ENCODE measurements at regions of chr1 and their contacts with region 1.

Region 1: DNA sequence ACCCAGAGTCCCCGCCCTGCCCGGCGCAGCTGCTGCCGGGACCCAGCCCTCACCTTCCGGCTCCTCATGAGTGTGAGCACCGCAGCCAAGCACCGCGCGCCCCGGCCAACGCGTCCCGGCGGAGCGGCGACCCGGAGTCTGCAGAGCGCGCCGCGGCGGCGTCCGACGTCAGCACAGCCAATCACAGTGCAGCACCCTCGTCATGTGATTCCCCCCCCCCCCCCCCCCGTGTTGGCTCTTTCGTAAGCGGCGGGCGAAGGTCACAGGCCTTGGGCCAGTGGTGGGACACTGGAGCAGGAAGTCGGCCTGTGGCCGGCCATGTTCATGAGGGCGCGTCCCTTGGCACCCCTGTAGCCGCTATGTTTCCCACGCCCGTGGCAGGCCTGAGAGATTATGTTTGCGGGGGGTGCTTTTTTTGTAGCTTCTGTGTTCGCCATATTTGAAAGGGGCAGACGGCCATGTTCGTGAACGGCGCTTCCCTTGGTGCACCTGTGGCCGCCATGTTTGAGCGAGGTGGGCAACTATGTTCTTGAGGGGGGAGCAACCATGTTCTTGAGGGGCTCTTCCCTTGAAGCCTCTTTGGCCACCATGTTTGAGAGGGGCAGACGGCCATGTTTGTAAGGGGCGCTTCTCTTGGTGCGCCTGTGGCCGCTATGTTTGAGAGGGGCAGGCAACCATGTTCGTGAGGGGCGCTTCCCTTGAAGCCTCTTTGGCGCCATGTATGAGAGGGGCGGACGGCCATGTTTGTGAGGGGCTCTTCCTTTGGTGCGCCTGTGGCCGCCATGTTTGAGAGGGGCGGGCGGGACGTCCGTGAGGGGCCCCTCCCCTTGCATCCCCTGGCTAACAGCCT is at the start of gene C1orf174:
- DNase-seq: peak; percentile 93
- H3K4me3 Mint-ChIP-seq: peak within 1 kb of the TSS; percentile 90
- H3K27ac Mint-ChIP-seq: peak within 1 kb of the TSS; percentile 99
- H3K4me1 Mint-ChIP-seq: peaks cover 55% of the 10 kb centered on the region
- H3K27me3 Mint-ChIP-seq: no peaks in the 10 kb centered on the region
- total RNA-seq, gene C1orf174: 29.5 to 30.6 TPM

Region 2: GRCh38 chr1:2575801-2576663 is 1324.3 kb before region 1 on chr1:
- CTCF ChIA-PET with region 1: no interaction called
- intact Hi-C with region 1: loop called (anchors 5 kb)
- DNase-seq: no peak
- H3K4me3 Mint-ChIP-seq: no peak overlapping the region
- H3K27ac Mint-ChIP-seq: peak overlapping the region; percentile 97
- H3K4me1 Mint-ChIP-seq: peaks cover 40% of the 10 kb centered on the region
- H3K27me3 Mint-ChIP-seq: no peaks in the 10 kb centered on the region

Region 3: DNA sequence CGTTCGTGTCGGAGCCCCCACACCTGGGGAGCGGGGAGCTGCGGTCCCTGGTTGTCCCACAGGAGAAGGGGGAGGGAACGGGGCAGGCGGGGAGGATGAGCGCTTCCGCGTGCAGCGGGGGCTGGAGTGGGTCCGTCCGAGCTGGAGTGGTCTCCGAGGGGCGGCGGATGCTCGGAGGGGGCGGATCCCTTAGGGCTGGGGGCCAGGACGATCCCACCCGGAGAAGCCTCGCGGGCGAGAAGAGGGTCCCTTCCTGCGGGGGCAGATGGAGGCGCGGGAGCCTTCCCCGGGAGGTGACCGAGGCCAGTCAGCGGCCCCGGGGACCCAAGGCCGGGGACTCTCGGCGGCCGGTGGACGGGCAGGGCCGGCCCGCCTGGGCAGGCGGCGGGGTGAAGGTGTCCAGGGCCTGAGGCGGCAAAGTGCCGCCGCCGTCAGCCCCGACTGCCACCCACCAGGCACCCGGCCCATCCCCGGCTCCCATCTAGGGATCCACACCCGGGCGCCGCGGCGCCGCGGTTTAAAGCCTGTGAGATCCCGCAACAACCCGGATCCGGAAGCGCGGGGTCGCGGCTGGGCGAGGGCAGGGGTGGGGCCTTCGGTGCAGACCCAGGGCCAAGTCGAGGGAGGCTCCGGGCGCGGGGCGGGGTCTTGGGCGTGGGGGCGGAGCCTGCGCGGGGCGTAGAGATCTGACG is 153.4 kb before region 1 on chr1:
- CTCF ChIA-PET with region 1: no interaction called
- intact Hi-C with region 1: loop called (anchors 1 kb)
- DNase-seq: peak; percentile 93
- H3K4me3 Mint-ChIP-seq: peak overlapping the region; percentile 75
- H3K27ac Mint-ChIP-seq: peak overlapping the region; percentile 24
- H3K4me1 Mint-ChIP-seq: peaks cover 35% of the 10 kb centered on the region
- H3K27me3 Mint-ChIP-seq: no peaks in the 10 kb centered on the region

Region 4: DNA sequence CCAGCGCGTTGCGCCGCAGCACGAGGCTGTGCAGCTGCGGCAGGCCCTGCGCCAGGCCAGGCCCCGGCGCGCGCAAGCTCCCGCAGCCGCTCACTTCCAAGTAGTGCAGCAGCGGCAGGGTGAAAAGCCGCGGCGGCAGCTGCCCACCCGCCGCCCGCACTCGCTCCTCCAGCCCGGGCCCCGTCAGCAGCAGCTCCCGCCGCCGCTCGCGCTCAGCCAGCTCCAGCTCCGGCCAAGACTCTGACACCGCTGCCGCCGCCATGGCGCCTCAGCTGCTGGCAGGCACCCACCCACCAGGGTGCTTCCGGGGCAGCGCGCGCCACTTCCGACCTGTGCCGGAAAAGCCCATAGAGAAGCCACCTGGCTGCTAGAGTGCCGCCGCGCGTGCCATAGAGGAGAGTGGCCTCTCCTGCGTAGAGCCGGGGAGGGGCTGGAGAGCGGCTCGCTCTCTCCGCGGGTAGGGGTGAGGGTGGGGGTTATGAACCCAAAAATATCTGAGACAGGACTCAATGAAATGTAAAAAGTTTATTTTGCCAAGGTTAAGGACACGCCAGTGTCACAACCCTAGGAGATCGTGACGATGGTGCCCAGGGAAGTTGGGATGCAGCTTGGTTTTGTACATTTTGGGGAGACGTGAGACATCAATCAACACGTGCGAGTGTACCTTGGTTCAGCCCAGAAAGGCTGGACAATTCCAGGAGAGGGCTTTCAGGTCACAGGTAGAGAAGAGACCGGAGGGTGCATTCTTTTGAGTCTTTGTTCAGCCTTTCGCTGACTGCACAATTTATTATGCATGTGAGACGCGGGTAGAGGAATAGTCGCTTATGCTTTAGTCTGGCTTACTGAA is 103.9 kb before region 1 on chr1 and contains the start of gene LRRC47:
- CTCF ChIA-PET with region 1: no interaction called
- intact Hi-C with region 1: loop called (anchors 1 kb)
- DNase-seq: peak; percentile 96
- H3K4me3 Mint-ChIP-seq: peak within 1 kb of the TSS; percentile 95
- H3K27ac Mint-ChIP-seq: peak within 1 kb of the TSS; percentile 82
- H3K4me1 Mint-ChIP-seq: peaks cover 43% of the 10 kb centered on the region
- H3K27me3 Mint-ChIP-seq: peaks cover 9% of the 10 kb centered on the region
- total RNA-seq, gene LRRC47: 22.0 to 23.9 TPM

Region 5: DNA sequence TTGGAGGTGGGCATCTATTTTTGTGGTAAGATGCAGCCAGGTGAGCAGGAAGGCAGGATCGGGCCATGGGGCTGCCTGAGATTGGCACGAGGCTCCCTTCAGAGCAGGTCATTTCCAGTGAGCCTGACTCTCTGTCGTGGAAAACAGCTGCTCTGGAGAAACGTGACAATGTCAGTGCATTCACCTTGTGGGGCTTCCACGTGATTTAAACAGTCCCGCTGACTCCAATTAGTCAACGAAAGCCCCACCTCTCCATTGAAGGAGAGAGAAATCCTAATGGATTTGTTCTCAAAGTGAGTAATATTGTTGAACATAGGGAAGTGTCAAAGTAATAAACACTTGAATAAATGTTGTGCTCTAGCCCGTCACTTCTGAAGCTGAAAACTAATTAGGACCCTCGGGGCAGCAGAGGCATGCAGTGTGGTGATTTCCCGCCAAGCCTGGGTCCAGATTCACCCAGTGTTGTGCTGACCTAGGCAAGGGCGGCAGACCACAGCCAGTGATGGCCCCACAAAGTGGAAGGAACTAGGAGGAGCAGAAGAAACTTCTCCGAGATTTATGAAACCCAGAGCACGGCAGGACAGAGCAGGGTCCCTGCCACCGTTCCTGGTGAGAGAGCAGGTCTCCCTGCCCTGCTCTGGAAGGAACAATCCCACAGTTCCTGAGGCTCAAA is 172.3 kb after region 1 on chr1:
- CTCF ChIA-PET with region 1: no interaction called
- intact Hi-C with region 1: no loop called
- DNase-seq: no peak
- H3K4me3 Mint-ChIP-seq: no peak overlapping the region
- H3K27ac Mint-ChIP-seq: no peak overlapping the region
- H3K4me1 Mint-ChIP-seq: no peaks in the 10 kb centered on the region
- H3K27me3 Mint-ChIP-seq: peaks cover 15% of the 10 kb centered on the region

Region 6: GRCh38 chr1:4087530-4088420 is 187.4 kb after region 1 on chr1:
- CTCF ChIA-PET with region 1: no interaction called
- intact Hi-C with region 1: loop called (anchors 5 kb)
- DNase-seq: peak; percentile 9
- H3K4me3 Mint-ChIP-seq: no peak overlapping the region
- H3K27ac Mint-ChIP-seq: no peak overlapping the region
- H3K4me1 Mint-ChIP-seq: no peaks in the 10 kb centered on the region
- H3K27me3 Mint-ChIP-seq: peaks cover 2% of the 10 kb centered on the region

Measured in activated naive CD4-positive, alpha-beta T cell treated with anti-CD3 and anti-CD28 coated beads for 36 hours (primary cell).